ENCODE measurements at regions of chrX and their contacts with region 1.

Region 1: GRCh38 chrX:155326610-155327009 is 7.8 kb downstream of the CLIC2 start:
- DNase-seq: no peak
- ATAC-seq: no peak
- H3K4me3 ChIP-seq: no peak overlapping the region
- H3K27ac ChIP-seq: no peak overlapping the region
- H3K4me1 ChIP-seq: no peaks in the 10 kb centered on the region
- H3K27me3 ChIP-seq: no peaks in the 10 kb centered on the region
- CTCF ChIP-seq: no peak
- POLR2A ChIP-seq: no peak

Region 2: DNA sequence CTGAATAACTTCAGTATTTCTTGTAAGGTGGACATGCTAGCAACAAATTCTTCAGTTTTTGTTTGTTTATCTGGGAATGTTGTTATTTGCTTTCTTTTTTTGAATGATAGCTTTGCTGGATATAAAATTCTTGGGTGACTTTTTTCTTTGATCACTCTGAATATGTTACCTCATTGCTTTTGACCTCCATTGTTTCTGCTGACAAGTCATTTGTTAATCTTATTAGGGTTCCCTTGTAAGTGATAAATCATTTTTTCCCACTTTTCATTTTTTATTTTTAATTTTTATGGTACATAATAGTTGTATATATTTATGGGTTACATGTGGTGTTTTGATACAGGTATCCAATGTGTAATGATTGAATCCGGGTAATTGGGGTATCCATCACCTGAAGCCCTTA is 55.6 kb before region 1 on chrX:
- in situ Hi-C with region 1: no loop called
- intact Hi-C with region 1: loop called (anchors 2 kb)
- DNase-seq: no peak
- ATAC-seq: no peak
- H3K4me3 ChIP-seq: no peak overlapping the region
- H3K27ac ChIP-seq: no peak overlapping the region
- H3K4me1 ChIP-seq: no peaks in the 10 kb centered on the region
- H3K27me3 ChIP-seq: no peaks in the 10 kb centered on the region
- CTCF ChIP-seq: no peak
- POLR2A ChIP-seq: no peak